Mammary epithelial cell (primary cell): ENCODE measurements at regions of chr6 and their contacts with region 1.

Region 1: DNA sequence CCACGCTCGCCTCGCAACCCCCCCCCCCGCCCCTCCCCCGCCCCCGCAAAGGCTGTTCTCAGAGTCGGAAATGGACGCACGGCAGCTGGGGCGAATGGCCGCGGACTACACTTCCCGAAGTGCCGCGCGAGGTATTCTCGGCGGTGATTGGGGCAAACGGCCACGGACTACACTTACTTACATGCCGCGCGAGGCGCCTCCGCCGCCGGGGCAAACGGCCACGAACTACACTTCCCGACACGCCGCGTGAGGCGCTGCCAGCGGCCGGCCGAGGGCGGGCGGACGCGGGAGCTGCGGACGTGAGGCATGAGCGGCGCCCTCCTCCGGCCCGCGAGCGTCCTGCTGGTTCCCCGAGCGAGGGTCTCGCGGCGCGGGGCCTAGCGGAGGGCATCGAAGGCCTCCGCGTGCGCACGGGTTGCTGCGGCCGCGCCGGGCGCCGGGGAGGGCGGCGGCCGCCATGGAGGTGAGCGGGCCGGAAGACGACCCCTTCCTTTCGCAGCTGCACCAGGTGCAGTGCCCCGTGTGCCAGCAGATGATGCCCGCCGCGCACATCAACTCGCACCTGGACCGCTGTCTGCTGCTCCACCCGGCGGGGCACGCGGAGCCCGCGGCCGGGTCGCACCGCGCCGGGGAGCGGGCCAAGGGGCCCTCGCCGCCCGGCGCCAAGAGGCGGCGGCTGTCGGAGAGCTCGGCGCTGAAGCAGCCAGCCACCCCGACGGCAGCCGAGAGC is at the start of gene WRNIP1:
- DNase-seq: peak; percentile 99
- H3K4me3 ChIP-seq: peak within 1 kb of the TSS; percentile 68 to 88 (median 82)
- H3K27ac ChIP-seq: peak within 1 kb of the TSS; percentile 94
- H3K4me1 ChIP-seq: peaks cover 32% of the 10 kb centered on the region
- H3K27me3 ChIP-seq: no peaks in the 10 kb centered on the region
- CTCF ChIP-seq: peak; percentile 33 to 53
- total RNA-seq, gene WRNIP1: 43.3 to 46.0 TPM

Region 2: DNA sequence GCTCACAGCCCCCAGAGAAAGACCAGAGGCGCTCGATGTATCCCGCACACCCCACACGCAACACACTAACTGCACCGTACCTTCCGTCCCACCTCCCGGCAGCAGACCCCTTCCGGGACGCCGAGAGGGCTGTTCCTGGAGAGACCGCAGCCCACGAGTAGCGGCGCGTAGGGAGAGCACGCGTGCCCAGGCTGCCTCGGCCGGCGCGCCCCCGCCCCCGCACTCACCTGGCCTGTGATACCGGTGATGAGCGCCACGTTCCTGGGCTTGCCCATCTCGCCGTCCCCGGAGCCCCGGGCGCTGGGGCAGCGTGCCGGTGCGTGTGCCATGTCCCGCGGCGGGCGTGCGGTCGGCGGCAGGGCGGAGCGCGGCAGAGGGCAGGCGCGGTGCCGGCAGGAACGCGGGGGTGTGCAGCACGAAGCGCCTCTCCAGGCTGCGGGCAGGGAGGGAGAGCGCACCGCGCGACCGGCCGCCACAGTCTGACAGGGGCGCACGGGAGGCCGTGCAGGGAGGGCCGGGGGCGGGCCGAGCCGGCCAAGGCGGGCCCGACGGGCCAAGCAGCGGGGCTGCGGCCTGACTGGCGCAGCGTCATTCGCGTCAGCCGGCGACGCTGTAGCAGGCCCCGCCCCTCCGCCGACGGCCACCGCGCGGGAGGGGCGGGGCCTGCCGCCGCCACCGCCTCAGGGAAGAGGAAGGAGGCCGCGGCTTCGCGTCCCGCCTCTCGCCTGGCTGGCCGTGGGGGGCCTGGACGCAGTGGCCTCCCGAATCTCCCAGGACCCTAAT is 520.0 kb before region 1 on chr6 and contains the start of gene GMDS:
- CTCF ChIA-PET with region 1: no interaction called
- dilution Hi-C with region 1: no loop called
- in situ Hi-C with region 1: no loop called
- intact Hi-C with region 1: loop called (anchors 10 kb)
- DNase-seq: peak; percentile 87
- H3K4me3 ChIP-seq: peak within 1 kb of the TSS; percentile 55 to 90 (median 79)
- H3K27ac ChIP-seq: peak within 1 kb of the TSS; percentile 63
- H3K4me1 ChIP-seq: peaks cover 12% of the 10 kb centered on the region
- H3K27me3 ChIP-seq: no peaks in the 10 kb centered on the region
- CTCF ChIP-seq: no peak
- total RNA-seq, gene GMDS: 11.5 to 34.1 TPM

Region 3: GRCh38 chr6:2810092-2810671 is 44.9 kb after region 1 on chr6:
- CTCF ChIA-PET with region 1: no interaction called
- dilution Hi-C with region 1: no loop called
- in situ Hi-C with region 1: no loop called
- intact Hi-C with region 1: loop called (anchors 2 kb)
- DNase-seq: peak; percentile 100
- H3K4me3 ChIP-seq: no peak overlapping the region
- H3K27ac ChIP-seq: peak overlapping the region; percentile 100
- H3K4me1 ChIP-seq: peaks cover 39% of the 10 kb centered on the region
- H3K27me3 ChIP-seq: no peaks in the 10 kb centered on the region
- CTCF ChIP-seq: peak in 1 of 2 donors; percentile 5

Region 4: DNA sequence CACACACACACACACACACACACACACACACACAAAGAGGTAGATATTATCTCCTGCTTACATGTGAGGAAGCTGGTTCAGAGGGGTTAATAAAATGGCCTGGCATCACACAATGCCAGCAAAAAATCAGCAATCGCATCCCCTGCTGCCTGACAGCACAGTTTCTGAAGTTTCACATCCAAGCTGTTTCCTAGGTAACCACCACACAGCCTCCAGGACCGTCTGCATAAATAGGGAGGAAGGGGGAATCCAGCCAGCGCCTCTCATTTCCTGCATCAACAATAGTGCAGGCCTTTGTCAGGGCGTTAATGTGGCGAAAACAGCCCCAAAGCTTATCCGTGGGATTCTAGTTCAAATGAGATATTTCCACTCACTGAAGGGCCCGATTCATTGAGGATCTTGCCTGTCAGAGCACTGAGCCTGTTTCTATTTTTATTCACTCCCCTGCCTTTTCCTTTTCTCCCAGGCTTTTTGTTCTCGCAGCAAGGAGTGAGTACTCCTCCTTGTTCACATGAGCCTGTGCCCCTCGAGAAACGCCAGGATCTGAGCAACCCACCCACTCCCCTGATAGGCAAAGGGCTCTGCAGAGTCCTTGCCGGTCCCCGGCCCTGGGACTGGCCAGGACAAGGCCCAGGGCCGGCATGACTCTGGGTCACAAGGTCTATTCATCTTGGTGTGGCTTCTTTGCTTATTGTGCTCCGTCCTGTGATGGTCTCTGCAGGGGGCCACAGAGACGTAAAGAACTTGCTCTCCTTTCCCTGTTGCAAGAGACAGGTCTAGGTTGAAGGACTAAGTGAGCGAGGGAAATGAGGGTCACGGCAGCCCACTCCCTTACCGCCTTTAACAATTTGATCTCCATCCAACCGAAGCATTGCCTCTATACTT is 429.4 kb after region 1 on chr6:
- CTCF ChIA-PET with region 1: no interaction called
- dilution Hi-C with region 1: no loop called
- in situ Hi-C with region 1: no loop called
- intact Hi-C with region 1: no loop called
- DNase-seq: no peak
- H3K4me3 ChIP-seq: no peak overlapping the region
- H3K27ac ChIP-seq: no peak overlapping the region
- H3K4me1 ChIP-seq: no peaks in the 10 kb centered on the region
- H3K27me3 ChIP-seq: no peaks in the 10 kb centered on the region
- CTCF ChIP-seq: no peak